K562 (cell line): ENCODE measurements at regions of chr19 and their contacts with region 1.

Region 1: GRCh38 chr19:8252922-8253589 is 43.9 kb downstream of the CERS4 start:
- DNase-seq: peak; percentile 88 to 90 (median 90)
- ATAC-seq: peak; percentile 90
- H3K4me3 ChIP-seq: no peak overlapping the region
- H3K27ac ChIP-seq: no peak overlapping the region
- H3K4me1 ChIP-seq: peaks cover 13 to 42% of the 10 kb centered on the region in 2 experiments; a peak in 4 of 5 replicates
- H3K27me3 ChIP-seq: no peaks in the 10 kb centered on the region
- CTCF ChIP-seq: peak; percentile 95 to 97 (median 97)
- EP300 ChIP-seq: no peak
- POLR2A ChIP-seq: no peak
- RAD21 ChIP-seq: peak; percentile 98 to 99

Region 2: GRCh38 chr19:7515645-7516151 is 737.4 kb before region 1 on chr19 and contains the start of gene ZNF358:
- CTCF ChIA-PET with region 1: no interaction called
- POLR2A ChIA-PET with region 1: no interaction called
- in situ Hi-C with region 1: no loop called
- intact Hi-C with region 1: no loop called
- DNase-seq: peak; percentile 82 to 91 (median 88)
- ATAC-seq: peak; percentile 98
- H3K4me3 ChIP-seq: peak within 1 kb of the TSS; percentile 40
- H3K27ac ChIP-seq: peak within 1 kb of the TSS; percentile 1; the same call in 1 of the 3 replicates
- H3K4me1 ChIP-seq: peaks cover 11 to 22% of the 10 kb centered on the region in 2 experiments
- H3K27me3 ChIP-seq: no peaks in the 10 kb centered on the region
- CTCF ChIP-seq: no peak
- EP300 ChIP-seq: no peak
- POLR2A ChIP-seq: 0 out of 2 replicates have a peak, but pooled peaks have one; percentile 33
- RAD21 ChIP-seq: no peak
- polyA plus RNA-seq, gene ZNF358: 0.04 TPM

Region 3: DNA sequence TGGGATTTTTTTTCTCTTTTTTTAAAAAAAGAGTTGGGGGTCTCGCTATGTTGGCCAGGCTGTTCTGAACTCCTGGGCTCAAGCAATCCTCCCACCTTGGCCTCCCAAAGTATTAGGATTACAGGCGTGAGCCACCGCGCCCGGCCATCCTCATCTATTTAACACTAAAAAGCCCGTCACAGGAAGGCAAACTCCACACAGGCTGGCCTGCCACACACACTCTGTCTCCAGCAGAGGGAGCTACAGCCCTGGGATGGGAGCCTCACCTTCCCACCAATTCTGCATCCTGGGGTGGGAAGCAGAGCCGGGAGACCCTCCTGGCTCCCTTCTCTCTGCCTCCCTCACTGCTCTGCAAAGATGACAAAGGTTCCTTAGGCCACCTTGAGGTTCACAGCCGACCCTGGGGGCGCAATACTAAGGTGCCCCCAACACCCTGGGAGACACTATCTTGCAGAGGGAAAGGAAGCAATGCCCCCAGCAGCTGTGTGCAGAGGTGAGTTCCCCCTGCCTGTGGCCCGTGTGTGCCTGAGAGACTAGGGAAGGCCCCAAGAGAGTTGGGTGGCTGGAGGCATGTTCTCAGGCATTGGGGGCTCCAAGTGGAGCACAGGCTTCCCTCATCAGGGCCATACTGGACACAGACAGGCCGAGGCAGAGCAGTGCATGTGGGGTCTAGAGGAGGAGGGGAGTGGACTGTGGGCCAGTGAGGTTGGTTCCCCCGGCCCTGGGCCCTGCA is 282.2 kb before region 1 on chr19:
- CTCF ChIA-PET with region 1: interaction called, 12 read pairs
- POLR2A ChIA-PET with region 1: no interaction called
- in situ Hi-C with region 1: no loop called
- intact Hi-C with region 1: no loop called
- DNase-seq: peak; percentile 54 to 64 (median 58)
- ATAC-seq: peak; percentile 91
- H3K4me3 ChIP-seq: no peak overlapping the region
- H3K27ac ChIP-seq: no peak overlapping the region
- H3K4me1 ChIP-seq: peaks cover 0 to 4% of the 10 kb centered on the region in 2 experiments; a peak in 2 of 5 replicates
- H3K27me3 ChIP-seq: no peaks in the 10 kb centered on the region
- CTCF ChIP-seq: peak; percentile 71 to 81 (median 78)
- EP300 ChIP-seq: no peak
- POLR2A ChIP-seq: 0 out of 2 replicates have a peak, but pooled peaks have one; percentile 24
- RAD21 ChIP-seq: peak; percentile 54 to 76

Region 4: DNA sequence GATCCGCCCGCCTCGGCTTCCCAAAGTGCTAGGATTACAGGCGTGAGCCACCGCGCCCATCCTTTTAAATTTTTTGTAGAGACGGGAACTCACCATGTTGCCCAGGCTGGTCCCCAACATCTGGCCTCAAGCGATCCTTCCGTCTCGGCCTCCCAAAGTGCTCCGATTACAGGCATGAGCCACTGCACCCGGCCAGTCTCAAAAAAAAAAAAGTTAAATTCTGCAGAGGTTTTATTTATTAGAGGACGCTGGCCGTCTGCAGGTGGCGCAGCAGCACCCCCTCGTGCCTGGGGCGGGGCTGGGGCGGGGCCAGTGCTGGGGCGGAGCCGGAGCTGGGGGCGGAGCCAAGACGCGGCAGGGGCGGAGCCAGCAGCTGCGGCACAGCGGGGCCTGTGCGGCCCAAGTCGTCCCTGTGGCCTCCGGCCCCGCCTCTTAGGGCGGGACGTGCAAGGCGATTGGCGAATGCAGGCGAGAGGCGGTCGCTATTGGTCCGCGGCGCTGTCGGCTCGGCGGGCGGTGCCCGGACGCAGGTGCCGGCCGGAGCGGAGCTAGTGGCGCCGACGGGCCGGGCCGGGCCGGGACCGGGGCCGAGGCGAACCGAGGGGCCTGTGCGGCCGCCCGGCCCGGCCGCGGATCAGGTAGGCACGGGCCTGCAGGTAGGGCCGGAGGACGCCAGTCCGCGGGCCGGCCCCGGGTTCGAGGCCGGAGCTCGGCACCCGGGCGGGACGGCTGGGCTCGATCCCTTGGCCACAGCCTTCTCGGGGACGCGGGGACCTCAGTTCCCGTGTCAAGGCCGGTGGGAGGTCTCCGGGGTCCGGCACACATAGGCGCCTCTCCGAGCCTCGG is 159.9 kb after region 1 on chr19 and contains the start of gene MARCHF2:
- CTCF ChIA-PET with region 1: no interaction called
- POLR2A ChIA-PET with region 1: no interaction called
- in situ Hi-C with region 1: no loop called
- intact Hi-C with region 1: no loop called
- DNase-seq: peak; percentile 97 to 99 (median 98)
- ATAC-seq: peak; percentile 99
- H3K4me3 ChIP-seq: peak within 1 kb of the TSS; percentile 53
- H3K27ac ChIP-seq: no peak within 1 kb of the TSS
- H3K4me1 ChIP-seq: peaks cover 22 to 39% of the 10 kb centered on the region in 2 experiments; a peak in 4 of 5 replicates
- H3K27me3 ChIP-seq: no peaks in the 10 kb centered on the region
- CTCF ChIP-seq: peak; percentile 58 to 80 (median 76)
- EP300 ChIP-seq: no peak
- POLR2A ChIP-seq: no peak
- RAD21 ChIP-seq: peak; percentile 52 to 58
- polyA plus RNA-seq, gene MARCHF2: 0.39 to 0.41 TPM